ENCODE measurements at regions of chr2 and their contacts with region 1.

Region 1: DNA sequence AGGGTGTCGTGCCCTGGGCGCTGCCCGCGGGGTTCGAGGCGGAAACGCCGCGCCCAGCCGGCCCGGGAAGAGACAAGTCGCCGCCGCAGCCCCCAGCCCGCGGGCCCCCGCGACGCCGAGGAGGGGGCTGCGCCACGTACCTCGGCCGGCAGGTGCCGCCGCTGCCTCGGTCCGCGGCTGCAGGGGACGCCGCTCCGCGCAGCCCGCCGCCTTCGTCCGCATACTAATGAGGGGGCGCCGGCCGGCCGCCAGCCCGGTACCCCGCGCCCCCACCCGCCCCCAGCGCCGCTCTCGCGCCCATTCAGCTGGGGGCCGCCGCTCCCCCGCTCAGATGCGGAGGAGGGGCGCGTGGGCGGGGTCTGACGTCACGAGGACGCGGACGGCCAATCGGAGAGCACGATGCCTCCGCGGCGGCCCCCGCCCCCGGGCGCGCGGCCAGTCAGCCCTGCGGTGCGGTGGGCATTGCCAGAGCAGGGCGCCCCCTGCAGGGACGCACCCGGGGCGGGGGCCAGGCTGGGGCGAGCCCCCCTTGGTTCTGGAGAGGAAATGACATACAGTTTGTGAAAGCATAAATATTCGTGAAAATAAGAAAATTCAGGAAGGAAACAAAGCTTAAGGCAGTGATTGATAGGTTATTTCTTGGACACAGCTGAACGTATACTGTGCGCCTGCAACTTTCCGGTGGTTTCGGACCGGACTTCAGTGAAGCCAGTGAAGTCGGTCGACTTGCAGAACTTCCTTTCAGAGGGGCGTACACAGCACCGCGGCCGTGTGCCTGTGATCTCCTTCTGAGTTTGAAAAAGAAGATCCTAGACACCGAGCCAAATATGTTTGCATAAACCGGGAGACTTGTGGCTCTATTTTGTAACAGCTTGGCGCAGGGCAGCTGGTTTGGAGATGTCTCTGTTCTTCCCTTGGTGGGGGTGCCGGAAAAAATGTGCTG is at the start of gene ST3GAL5:
- DNase-seq: peak; percentile 94
- total RNA-seq, gene ST3GAL5: 3.8 TPM

Region 2: GRCh38 chr2:85728883-85729824 is 159.8 kb before region 1 on chr2:
- intact Hi-C with region 1: loop called (anchors 10 kb)
- DNase-seq: peak; percentile 95

Region 3: DNA sequence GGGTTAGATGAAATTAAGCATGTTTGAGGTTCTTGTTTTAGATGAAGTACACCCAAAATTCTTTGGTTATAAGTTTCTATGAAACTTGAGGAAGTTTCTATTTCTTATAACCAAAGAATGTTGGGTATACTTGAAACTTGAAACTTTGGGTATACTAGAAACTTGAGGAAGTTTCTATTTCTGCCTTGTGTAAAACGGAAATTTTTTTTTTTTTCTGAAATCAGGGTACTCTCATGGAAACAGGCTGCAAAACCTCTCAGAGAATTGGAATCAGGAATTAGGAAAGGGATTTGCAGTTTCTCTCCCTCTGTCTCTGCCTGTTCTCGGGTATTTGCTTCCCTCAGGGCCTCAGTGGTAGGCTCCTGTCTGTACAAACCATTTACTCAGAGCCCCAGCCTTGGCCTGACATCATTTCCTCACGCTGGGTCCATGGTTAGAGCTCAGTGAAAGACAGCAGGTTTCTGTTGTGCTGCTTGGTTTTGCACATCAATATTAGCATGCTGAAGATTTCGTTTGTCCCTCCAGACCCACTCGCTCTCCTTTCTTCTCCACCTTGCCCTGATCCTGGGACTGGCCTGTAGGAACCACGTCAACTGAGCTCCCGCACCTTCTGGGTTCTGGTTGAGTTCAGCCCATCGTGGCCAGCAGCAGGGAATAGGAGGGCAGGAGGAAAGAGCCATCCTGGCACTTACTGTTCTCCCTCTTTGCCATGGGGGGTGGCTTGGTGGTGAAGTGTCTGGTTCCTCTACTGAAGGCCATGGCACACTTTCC is 110.3 kb after region 1 on chr2:
- intact Hi-C with region 1: loop called (anchors 10 kb)
- DNase-seq: peak; percentile 65

Region 4: DNA sequence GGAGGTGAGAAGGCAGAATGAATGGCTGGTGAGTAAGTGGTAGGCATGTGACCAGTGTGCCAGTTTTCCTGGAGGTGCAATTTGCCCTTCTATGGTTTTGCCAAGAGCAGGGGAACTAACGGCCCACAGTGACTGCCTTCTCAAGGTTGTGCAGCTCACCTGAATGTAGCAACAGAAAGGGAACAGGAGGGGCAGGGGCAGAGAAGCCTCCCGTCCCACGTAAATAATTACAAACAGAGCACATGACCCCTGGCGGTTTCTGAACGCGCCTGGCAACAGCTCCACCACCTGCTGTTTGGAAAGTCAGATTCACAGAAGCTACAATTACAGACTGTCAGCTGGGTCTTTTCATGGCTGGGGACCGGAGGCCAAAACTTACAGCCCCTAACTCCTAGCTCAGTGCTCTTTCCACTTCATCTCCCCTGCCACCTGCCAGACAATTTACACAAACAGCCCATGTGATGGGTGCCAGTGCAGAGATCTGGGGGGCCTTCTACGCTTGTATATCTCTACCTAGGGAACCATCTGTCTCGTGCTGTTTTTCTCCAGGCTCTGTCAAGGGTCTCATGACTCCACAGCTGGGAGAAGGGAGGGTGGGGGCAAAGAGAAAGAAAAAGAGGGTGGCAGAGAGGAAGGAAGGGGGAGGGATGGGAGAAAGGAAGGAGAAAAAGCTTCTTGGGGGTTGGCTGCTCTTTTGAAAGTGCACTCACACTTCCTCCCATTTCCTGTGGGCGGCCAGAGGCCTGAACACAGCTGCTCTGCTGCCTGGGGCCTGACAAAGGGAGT is 147.1 kb after region 1 on chr2:
- intact Hi-C with region 1: loop called (anchors 2 kb)
- DNase-seq: peak; percentile 92

Region 5: GRCh38 chr2:86079981-86080911 is 191.3 kb after region 1 on chr2:
- intact Hi-C with region 1: loop called (anchors 2 kb)
- DNase-seq: peak; percentile 91